ENCODE measurements at regions of chr13 and their contacts with region 1.

Region 1: GRCh38 chr13:50911937-50912795 is 2.6 kb downstream of the RNASEH2B start:
- DNase-seq: peak; percentile 72 to 86 (median 82)
- ATAC-seq: peak; percentile 73
- H3K4me3 ChIP-seq: peak overlapping the region; percentile 86
- H3K4me3 Mint-ChIP-seq: peak overlapping the region; percentile 72 to 99 (median 93)
- H3K27ac ChIP-seq: peak overlapping the region; percentile 86
- H3K27ac Mint-ChIP-seq: peak overlapping the region; percentile 72 to 98 (median 92)
- H3K4me1 ChIP-seq: peaks cover 15 to 28% of the 10 kb centered on the region in 2 donors
- H3K4me1 Mint-ChIP-seq: peaks cover 34 to 70% (median 62%) of the 10 kb centered on the region in 7 donors
- H3K27me3 ChIP-seq: no peaks in the 10 kb centered on the region
- H3K27me3 Mint-ChIP-seq: no peaks in the 10 kb centered on the region

Region 2: GRCh38 chr13:49936085-49936940 is 975.9 kb before region 1 on chr13 and contains the start of gene SPRYD7:
- CTCF ChIA-PET with region 1: interaction called, 3 read pairs
- POLR2A ChIA-PET with region 1: interaction called, 6 read pairs
- intact Hi-C with region 1: loop called (anchors 1 kb)
- DNase-seq: peak; percentile 82 to 99 (median 90)
- ATAC-seq: peak; percentile 98
- H3K4me3 ChIP-seq: peak within 1 kb of the TSS; percentile 99
- H3K4me3 Mint-ChIP-seq: peak within 1 kb of the TSS; percentile 86 to 99 (median 96)
- H3K27ac ChIP-seq: peak within 1 kb of the TSS; percentile 69
- H3K27ac Mint-ChIP-seq: peak within 1 kb of the TSS; percentile 74 to 95 (median 86)
- H3K4me1 ChIP-seq: peaks cover 10 to 14% of the 10 kb centered on the region in 2 donors
- H3K4me1 Mint-ChIP-seq: peaks cover 12 to 28% (median 15%) of the 10 kb centered on the region in 7 donors
- H3K27me3 ChIP-seq: no peaks in the 10 kb centered on the region
- H3K27me3 Mint-ChIP-seq: peaks cover 0 to 33% (median 0%) of the 10 kb centered on the region in 5 donors
- total RNA-seq, gene SPRYD7: 1.7 to 3.1 (median 2.3) TPM

Region 3: DNA sequence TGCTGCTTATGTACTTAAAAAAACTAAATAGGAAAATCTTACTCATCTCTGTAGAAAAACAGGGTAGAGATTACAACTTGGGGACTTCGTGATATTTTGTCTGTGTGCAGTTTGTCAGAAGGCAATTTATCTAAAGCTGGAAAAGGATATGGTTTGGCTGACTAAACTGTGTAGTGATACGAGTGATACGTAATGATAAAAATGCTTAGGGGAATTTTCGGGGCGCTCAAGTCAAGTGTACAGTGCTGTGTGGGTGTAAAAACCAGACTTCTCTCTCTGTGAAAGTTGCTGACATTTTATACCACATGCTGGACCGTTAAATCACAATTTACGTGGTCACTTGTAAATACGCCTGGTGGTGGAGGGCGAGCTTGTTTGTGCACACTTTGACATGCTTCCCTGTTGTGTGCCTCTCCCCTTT is 675.3 kb before region 1 on chr13:
- CTCF ChIA-PET with region 1: no interaction called
- POLR2A ChIA-PET with region 1: no interaction called
- intact Hi-C with region 1: loop called (anchors 5 kb)
- DNase-seq: peak in 4 of 9 donors; percentile 5 to 38 (median 14)
- ATAC-seq: peak; percentile 88
- H3K4me3 ChIP-seq: peak overlapping the region; percentile 43
- H3K4me3 Mint-ChIP-seq: peak overlapping the region; percentile 38 to 78 (median 65)
- H3K27ac ChIP-seq: no peak overlapping the region
- H3K27ac Mint-ChIP-seq: peak overlapping the region; percentile 3 to 66 (median 15)
- H3K4me1 ChIP-seq: peaks cover 5 to 8% of the 10 kb centered on the region in 2 donors
- H3K4me1 Mint-ChIP-seq: peaks cover 6 to 40% (median 19%) of the 10 kb centered on the region in 7 donors
- H3K27me3 ChIP-seq: no peaks in the 10 kb centered on the region
- H3K27me3 Mint-ChIP-seq: peaks cover 0 to 68% (median 0%) of the 10 kb centered on the region in 5 donors

Region 4: GRCh38 chr13:50512474-50513299 is 399.5 kb before region 1 on chr13:
- CTCF ChIA-PET with region 1: no interaction called
- POLR2A ChIA-PET with region 1: no interaction called
- intact Hi-C with region 1: loop called in 1 of 2 experiments (anchors 5 kb)
- DNase-seq: peak in 7 of 9 donors; percentile 11 to 41 (median 27)
- ATAC-seq: peak; percentile 76
- H3K4me3 ChIP-seq: peak overlapping the region; percentile 22
- H3K4me3 Mint-ChIP-seq: no peak overlapping the region
- H3K27ac ChIP-seq: peak overlapping the region; percentile 34
- H3K27ac Mint-ChIP-seq: no peak overlapping the region
- H3K4me1 ChIP-seq: peaks cover 15 to 16% of the 10 kb centered on the region in 2 donors
- H3K4me1 Mint-ChIP-seq: peaks cover 0 to 3% (median 0%) of the 10 kb centered on the region in 7 donors
- H3K27me3 ChIP-seq: no peaks in the 10 kb centered on the region
- H3K27me3 Mint-ChIP-seq: peaks cover 0 to 13% (median 0%) of the 10 kb centered on the region in 5 donors

Region 5: DNA sequence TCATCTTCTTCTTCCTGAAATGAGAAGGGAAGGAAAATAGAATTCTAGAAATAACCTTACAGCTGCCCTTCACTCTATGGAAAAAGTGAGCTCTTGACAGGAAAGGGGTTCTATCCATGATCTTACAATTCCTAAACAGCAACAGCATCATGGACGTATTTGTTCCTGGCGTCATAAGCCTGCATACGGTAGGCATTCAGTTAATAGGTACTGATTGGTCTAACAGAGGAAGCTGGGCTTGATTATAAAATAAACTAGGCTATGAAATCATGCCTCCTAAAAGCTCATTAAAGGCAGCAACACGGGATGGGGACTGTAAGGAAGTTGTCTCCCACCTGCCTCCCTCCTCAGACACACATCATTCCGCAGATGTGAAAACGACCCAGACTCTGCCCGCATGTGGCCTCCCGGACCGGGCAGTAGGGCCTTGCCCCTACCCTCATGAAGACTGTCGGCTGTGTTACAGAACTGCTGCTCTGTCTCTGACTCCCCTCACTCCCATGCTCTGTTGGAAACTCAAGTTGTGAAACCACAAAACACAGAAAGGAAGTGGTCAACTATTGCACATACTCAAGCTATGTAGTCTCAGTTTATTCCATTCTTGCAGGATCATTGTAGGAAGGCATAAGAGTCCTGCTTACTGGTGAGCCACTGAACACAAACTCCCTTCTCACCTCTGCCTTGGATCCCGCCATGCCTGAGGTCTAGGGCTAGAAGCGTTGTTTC is 198.5 kb before region 1 on chr13:
- CTCF ChIA-PET with region 1: no interaction called
- POLR2A ChIA-PET with region 1: interaction called, 3 read pairs
- intact Hi-C with region 1: loop called (anchors 10 kb)
- DNase-seq: peak in 6 of 9 donors; percentile 4 to 25 (median 16)
- ATAC-seq: peak; percentile 85
- H3K4me3 ChIP-seq: peak overlapping the region; percentile 12
- H3K4me3 Mint-ChIP-seq: peak overlapping the region; percentile 68 to 85 (median 78)
- H3K27ac ChIP-seq: no peak overlapping the region
- H3K27ac Mint-ChIP-seq: peak overlapping the region in 7 of 9 donors; percentile 4 to 63 (median 28)
- H3K4me1 ChIP-seq: peaks cover 8% of the 10 kb centered on the region in 2 donors
- H3K4me1 Mint-ChIP-seq: peaks cover 11 to 26% (median 14%) of the 10 kb centered on the region in 7 donors
- H3K27me3 ChIP-seq: no peaks in the 10 kb centered on the region
- H3K27me3 Mint-ChIP-seq: peaks cover 0 to 38% (median 5%) of the 10 kb centered on the region in 5 donors

Region 6: GRCh38 chr13:50783717-50784290 is 128.4 kb before region 1 on chr13:
- CTCF ChIA-PET with region 1: no interaction called
- POLR2A ChIA-PET with region 1: no interaction called
- intact Hi-C with region 1: no loop called
- DNase-seq: no peak
- ATAC-seq: no peak
- H3K4me3 ChIP-seq: no peak overlapping the region
- H3K4me3 Mint-ChIP-seq: no peak overlapping the region
- H3K27ac ChIP-seq: no peak overlapping the region
- H3K27ac Mint-ChIP-seq: no peak overlapping the region
- H3K4me1 ChIP-seq: no peaks in the 10 kb centered on the region
- H3K4me1 Mint-ChIP-seq: no peaks in the 10 kb centered on the region
- H3K27me3 ChIP-seq: no peaks in the 10 kb centered on the region
- H3K27me3 Mint-ChIP-seq: peaks cover 0 to 38% (median 9%) of the 10 kb centered on the region in 5 donors

Region 7: DNA sequence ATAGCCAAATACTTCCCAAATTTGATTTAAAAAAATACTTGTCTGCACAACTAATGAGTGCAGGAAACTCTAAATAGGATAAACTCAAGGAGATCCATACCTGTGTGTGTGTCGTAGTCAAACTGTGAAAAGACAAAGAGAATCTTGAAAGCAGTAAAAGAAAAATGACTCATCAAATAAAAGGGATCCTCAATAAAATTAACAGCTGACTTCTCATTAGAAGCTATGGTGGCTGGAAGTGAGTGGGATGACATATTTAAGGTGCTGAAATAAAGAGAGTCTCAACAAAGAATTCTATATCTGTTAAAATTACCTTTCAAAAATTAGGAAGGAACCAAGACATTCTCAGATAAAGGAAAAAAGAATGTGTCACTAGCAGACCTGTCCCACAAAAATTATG is 11.1 kb after region 1 on chr13:
- CTCF ChIA-PET with region 1: interaction called, 10 read pairs
- POLR2A ChIA-PET with region 1: interaction called, 6 read pairs
- intact Hi-C with region 1: no loop called
- DNase-seq: no peak
- ATAC-seq: no peak
- H3K4me3 ChIP-seq: no peak overlapping the region
- H3K4me3 Mint-ChIP-seq: no peak overlapping the region
- H3K27ac ChIP-seq: no peak overlapping the region
- H3K27ac Mint-ChIP-seq: no peak overlapping the region
- H3K4me1 ChIP-seq: peaks cover 0 to 4% of the 10 kb centered on the region in 2 donors
- H3K4me1 Mint-ChIP-seq: peaks cover 20 to 59% (median 51%) of the 10 kb centered on the region in 7 donors
- H3K27me3 ChIP-seq: no peaks in the 10 kb centered on the region
- H3K27me3 Mint-ChIP-seq: no peaks in the 10 kb centered on the region